Activated naive CD4-positive, alpha-beta T cell treated with anti-CD3 and anti-CD28 coated beads for 36 hours (primary cell): ENCODE measurements at regions of chr3 and their contacts with region 1.

Region 1: GRCh38 chr3:119034256-119035013 is at the start of gene IGSF11:
- DNase-seq: peak; percentile 67
- H3K4me3 Mint-ChIP-seq: peak within 1 kb of the TSS; percentile 82
- H3K27ac Mint-ChIP-seq: no peak within 1 kb of the TSS
- H3K4me1 Mint-ChIP-seq: peaks cover 6% of the 10 kb centered on the region
- H3K27me3 Mint-ChIP-seq: peaks cover 38% of the 10 kb centered on the region
- total RNA-seq, gene IGSF11: 0.07 to 0.12 TPM

Region 2: DNA sequence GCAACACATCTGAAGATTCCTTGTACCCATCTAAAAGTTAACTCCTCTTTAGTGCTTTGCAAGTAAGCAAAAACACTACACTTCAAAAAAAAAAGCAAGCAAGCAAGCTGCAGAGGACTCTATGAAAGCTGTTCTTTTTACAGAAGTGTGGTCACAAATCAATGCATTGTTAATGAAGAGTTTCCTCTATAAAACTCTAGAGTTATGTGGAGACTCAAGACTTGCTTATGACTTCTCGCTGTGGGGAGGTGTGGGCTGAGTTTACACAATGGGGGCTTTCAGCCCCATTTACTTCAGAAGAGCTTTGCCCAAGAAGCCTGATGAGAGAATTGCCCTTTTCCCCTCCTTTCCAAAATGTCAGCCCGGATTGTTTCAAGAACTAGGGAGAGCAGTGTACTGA is 144.2 kb before region 1 on chr3:
- CTCF ChIA-PET with region 1: interaction called, 309 read pairs
- intact Hi-C with region 1: loop called (anchors 1 kb)
- DNase-seq: no peak
- H3K4me3 Mint-ChIP-seq: no peak overlapping the region
- H3K27ac Mint-ChIP-seq: no peak overlapping the region
- H3K4me1 Mint-ChIP-seq: no peaks in the 10 kb centered on the region
- H3K27me3 Mint-ChIP-seq: no peaks in the 10 kb centered on the region

Region 3: DNA sequence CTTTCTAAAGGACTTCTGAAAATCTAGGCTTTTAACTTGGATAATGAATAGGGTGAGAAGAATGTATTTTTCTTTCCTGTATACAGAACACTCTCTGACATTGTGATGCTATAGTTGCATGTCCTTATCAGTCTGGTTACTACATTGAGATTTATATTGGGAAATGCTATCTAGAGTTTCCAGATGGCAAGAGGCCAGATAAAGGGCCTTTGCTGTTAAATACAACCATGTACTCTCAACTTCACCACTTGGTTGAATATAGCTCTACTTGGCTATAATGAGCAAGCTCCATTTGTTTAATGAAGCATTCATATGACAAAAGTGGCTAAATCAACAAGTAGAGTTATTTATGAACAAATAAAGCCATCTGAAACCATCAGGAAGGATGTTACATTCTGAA is 90.8 kb before region 1 on chr3:
- CTCF ChIA-PET with region 1: interaction called, 3 read pairs
- intact Hi-C with region 1: loop called (anchors 2 kb)
- DNase-seq: no peak
- H3K4me3 Mint-ChIP-seq: no peak overlapping the region
- H3K27ac Mint-ChIP-seq: no peak overlapping the region
- H3K4me1 Mint-ChIP-seq: peaks cover 45% of the 10 kb centered on the region
- H3K27me3 Mint-ChIP-seq: no peaks in the 10 kb centered on the region

Region 4: GRCh38 chr3:118955914-118956556 is 78.4 kb before region 1 on chr3:
- CTCF ChIA-PET with region 1: interaction called, 10 read pairs
- intact Hi-C with region 1: no loop called
- DNase-seq: no peak
- H3K4me3 Mint-ChIP-seq: no peak overlapping the region
- H3K27ac Mint-ChIP-seq: peak overlapping the region; percentile 78
- H3K4me1 Mint-ChIP-seq: peaks cover 43% of the 10 kb centered on the region
- H3K27me3 Mint-ChIP-seq: no peaks in the 10 kb centered on the region

Region 5: DNA sequence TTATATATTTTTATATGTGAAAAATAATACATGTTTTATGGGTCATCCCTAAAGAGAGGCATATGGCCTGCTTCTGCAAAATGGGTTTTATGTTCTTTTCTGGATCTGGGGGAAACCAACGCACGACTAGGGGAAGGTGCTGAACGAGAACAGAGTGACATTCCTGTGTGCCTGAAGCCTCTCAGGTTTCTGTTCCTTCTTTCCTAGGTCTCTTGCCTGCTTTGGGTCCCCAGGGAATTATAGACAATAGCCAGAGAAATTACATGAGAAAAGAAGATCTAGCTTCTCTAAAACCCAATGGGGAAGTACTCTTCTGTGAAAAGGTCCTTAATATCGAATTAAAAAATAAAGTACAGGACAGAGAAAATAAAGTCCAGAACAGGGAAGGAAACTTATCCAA is 66.3 kb before region 1 on chr3:
- CTCF ChIA-PET with region 1: interaction called, 11 read pairs
- intact Hi-C with region 1: no loop called
- DNase-seq: no peak
- H3K4me3 Mint-ChIP-seq: no peak overlapping the region
- H3K27ac Mint-ChIP-seq: no peak overlapping the region
- H3K4me1 Mint-ChIP-seq: no peaks in the 10 kb centered on the region
- H3K27me3 Mint-ChIP-seq: no peaks in the 10 kb centered on the region

Region 6: DNA sequence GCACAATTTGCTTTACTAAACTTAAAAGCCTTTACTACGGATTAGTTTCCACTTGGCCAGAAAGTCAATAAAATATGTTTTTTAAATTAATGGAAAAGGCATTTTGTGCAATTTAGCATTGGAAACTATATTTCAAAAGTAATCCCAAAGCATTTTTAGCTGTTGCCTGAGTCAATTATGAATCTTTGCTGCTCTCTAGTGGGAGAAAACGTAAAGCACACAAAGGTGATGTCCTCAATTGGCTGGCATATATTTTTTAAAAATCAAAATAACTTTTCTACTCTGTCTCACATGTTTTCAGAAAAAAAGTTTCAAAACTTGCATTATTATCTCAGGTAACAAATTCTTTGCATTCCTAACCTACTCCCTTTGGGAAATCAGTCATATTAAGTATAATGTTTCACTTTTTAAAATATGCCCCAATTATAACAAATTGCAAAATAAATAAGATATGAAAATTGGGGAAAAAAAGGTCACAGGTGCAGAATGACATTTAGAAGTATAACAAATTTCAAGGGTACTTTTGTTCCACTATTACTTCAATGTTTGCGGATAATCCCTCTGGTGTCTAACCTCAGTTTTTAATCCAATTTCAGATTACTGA is 64.3 kb after region 1 on chr3:
- CTCF ChIA-PET with region 1: interaction called, 11 read pairs
- intact Hi-C with region 1: loop called (anchors 1 kb)
- DNase-seq: no peak
- H3K4me3 Mint-ChIP-seq: no peak overlapping the region
- H3K27ac Mint-ChIP-seq: no peak overlapping the region
- H3K4me1 Mint-ChIP-seq: no peaks in the 10 kb centered on the region
- H3K27me3 Mint-ChIP-seq: no peaks in the 10 kb centered on the region

Region 7: GRCh38 chr3:119352849-119353502 is 318.5 kb after region 1 on chr3:
- CTCF ChIA-PET with region 1: no interaction called
- intact Hi-C with region 1: loop called (anchors 2 kb)
- DNase-seq: peak; percentile 13
- H3K4me3 Mint-ChIP-seq: no peak overlapping the region
- H3K27ac Mint-ChIP-seq: peak overlapping the region; percentile 43
- H3K4me1 Mint-ChIP-seq: peaks cover 30% of the 10 kb centered on the region
- H3K27me3 Mint-ChIP-seq: no peaks in the 10 kb centered on the region